Ascending aorta (tissue), 2 donors: ENCODE measurements at regions of chr6 and their contacts with region 1.

Region 1: GRCh38 chr6:25263657-25264056 is 15.5 kb upstream of the CARMIL1 start:
- DNase-seq: no peak
- H3K4me3 ChIP-seq: no peak overlapping the region
- H3K27ac ChIP-seq: no peak overlapping the region
- H3K4me1 ChIP-seq: peaks cover 2 to 8% of the 10 kb centered on the region in 2 donors
- H3K27me3 ChIP-seq: no peaks in the 10 kb centered on the region
- CTCF ChIP-seq: no peak

Region 2: DNA sequence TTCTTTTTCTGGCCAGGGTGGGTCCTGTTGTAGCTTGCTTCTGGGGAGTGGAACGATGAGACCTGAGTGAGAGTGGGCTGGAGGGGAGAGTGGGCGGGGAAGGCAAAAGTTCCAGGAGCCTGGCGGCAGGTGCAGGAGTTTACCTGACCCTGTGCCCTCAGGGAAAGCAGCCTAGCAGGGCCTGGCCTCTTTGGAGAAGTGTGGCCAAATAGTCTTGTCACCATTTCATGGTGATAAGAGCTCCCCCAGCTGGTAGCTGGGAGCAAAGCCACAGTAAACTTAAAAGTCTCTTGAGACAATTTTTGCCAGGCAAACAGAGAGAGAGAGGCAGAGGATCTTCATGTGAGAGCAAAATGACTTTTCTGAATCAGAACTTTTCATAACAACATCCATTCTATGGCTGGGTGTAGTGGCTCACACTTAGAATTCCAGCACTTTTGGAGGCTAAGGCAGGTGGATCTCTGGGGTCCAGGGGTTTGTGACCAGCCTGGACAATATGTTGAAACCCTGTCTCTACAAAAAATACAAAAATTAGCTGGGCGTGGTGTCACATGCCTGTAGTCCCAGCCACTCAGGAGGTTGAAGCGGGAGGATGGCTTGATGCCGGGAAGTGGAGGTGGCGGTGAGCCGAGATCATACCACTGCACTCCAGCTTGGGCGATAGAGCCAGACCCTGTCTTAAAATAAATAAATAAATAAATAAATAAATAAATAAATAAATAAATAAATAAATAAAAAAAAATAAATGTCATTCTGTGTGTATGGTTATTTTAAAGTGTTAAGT is 226.6 kb after region 1 on chr6:
- intact Hi-C with region 1: loop called (anchors 1 kb)
- DNase-seq: peak; percentile 10 to 87
- H3K4me3 ChIP-seq: no peak overlapping the region
- H3K27ac ChIP-seq: peak overlapping the region in 1 of 2 donors; percentile 5
- H3K4me1 ChIP-seq: peaks cover 0 to 9% of the 10 kb centered on the region in 2 donors
- H3K27me3 ChIP-seq: no peaks in the 10 kb centered on the region
- CTCF ChIP-seq: peak; percentile 76 to 89 (median 78)

Region 3: GRCh38 chr6:25556516-25556915 is 292.9 kb after region 1 on chr6:
- intact Hi-C with region 1: loop called (anchors 5 kb)
- DNase-seq: peak in 1 of 2 donors; percentile 80
- H3K4me3 ChIP-seq: no peak overlapping the region
- H3K27ac ChIP-seq: no peak overlapping the region
- H3K4me1 ChIP-seq: no peaks in the 10 kb centered on the region
- H3K27me3 ChIP-seq: no peaks in the 10 kb centered on the region
- CTCF ChIP-seq: peak; percentile 34 to 77 (median 70)

Region 4: DNA sequence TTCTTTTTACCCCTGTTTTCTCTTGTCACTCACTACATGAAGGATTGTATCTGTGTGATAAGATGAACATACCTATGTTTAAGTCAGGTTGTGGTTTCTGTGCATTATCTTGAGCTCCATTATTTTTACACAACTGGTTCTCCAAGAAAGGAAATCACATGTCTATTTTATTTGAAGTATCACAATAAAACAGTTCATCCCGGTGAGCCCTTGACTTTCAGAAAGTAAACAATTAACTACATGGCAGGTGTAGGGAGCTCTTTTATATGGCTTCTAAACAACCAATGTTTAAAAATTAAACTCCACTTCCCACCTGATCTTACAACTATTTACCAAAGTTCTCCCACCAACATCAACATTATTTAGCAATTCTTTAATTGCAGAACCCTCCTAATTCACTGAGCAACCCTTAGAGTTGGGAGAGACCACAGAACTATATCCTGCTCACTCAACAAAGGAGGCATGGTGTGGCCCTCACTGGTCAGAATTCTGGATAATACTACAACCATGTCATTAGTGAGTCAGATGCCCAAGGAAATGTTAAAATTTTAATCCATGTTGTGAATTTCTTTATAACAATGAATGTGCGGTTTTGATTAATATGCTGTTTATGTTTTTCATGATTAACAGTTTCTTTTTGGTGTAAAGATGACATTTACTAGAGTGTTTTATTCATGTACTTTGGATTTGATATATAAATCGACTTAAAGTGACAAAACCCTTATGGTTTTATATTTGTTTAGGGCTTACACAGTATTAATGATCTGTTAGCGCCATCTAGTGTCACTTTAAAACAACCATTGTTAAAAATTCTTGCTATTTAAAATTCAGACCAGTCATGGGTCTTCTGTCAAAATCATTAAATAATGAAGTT is 338.4 kb after region 1 on chr6:
- intact Hi-C with region 1: loop called (anchors 5 kb)
- DNase-seq: no peak
- H3K4me3 ChIP-seq: no peak overlapping the region
- H3K27ac ChIP-seq: no peak overlapping the region
- H3K4me1 ChIP-seq: no peaks in the 10 kb centered on the region
- H3K27me3 ChIP-seq: no peaks in the 10 kb centered on the region
- CTCF ChIP-seq: peak; percentile 41 to 57 (median 44)